A549 (cell line): ENCODE measurements at regions of chr15 and their contacts with region 1.

Region 1: GRCh38 chr15:71800835-71801745 is 9.3 kb upstream of the NR2E3 start:
- DNase-seq: peak; percentile 91 to 96
- ATAC-seq: peak; percentile 91 to 97
- H3K4me3 ChIP-seq: no peak overlapping the region
- H3K27ac ChIP-seq: peak overlapping the region; percentile 84
- H3K4me1 ChIP-seq: peaks cover 45% of the 10 kb centered on the region
- CTCF ChIP-seq: peak; percentile 98
- EP300 ChIP-seq: peak; percentile 95 to 97
- POLR2A ChIP-seq: no peak
- RAD21 ChIP-seq: peak; percentile 99

Region 2: GRCh38 chr15:70679919-70680231 is 1121.2 kb before region 1 on chr15:
- CTCF ChIA-PET with region 1: interaction called, 13 read pairs
- POLR2A ChIA-PET with region 1: no interaction called
- DNase-seq: no peak
- ATAC-seq: no peak
- H3K4me3 ChIP-seq: no peak overlapping the region
- H3K27ac ChIP-seq: no peak overlapping the region
- H3K4me1 ChIP-seq: no peaks in the 10 kb centered on the region
- CTCF ChIP-seq: no peak
- EP300 ChIP-seq: no peak
- POLR2A ChIP-seq: no peak
- RAD21 ChIP-seq: no peak

Region 3: GRCh38 chr15:71262599-71262998 is 538.5 kb before region 1 on chr15:
- CTCF ChIA-PET with region 1: no interaction called
- POLR2A ChIA-PET with region 1: no interaction called
- DNase-seq: no peak
- ATAC-seq: no peak
- H3K4me3 ChIP-seq: no peak overlapping the region
- H3K27ac ChIP-seq: no peak overlapping the region
- H3K4me1 ChIP-seq: no peaks in the 10 kb centered on the region
- CTCF ChIP-seq: no peak
- EP300 ChIP-seq: no peak
- POLR2A ChIP-seq: no peak
- RAD21 ChIP-seq: no peak

Region 4: DNA sequence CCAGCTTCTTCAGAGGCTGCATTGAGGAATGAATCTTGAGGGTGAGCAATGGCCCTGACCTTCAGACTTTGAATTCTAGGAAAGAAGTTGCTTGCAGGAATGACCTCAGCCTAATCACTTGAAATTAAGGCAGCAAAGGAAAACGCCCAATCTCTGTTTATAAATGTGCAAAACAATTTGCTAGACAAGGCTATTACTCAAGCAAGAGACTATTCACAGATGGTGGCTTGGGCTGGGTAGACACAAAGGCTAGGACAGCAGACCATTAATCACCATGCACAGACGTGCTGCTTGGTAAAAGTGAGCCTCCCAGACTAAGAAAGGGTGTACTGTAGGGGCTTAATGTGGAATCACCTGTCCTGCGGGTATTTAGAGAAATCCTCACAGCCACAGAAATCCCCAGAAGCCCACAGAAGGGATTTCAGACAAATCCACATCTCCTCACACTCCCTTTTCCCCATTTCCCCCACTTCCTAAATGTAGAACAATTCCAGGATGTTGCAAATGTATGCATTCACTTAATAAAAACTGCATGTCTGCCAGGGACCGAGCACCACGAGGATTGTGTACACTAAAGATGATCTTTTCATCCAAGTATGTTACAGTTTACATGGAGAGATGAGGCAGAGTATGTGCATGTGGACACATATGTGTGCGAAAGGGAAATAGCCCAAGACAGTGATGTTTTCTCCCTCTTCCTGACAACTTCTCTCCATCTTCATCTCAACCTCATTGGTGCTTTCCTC is 426.3 kb before region 1 on chr15:
- CTCF ChIA-PET with region 1: no interaction called
- POLR2A ChIA-PET with region 1: no interaction called
- DNase-seq: no peak
- ATAC-seq: no peak
- H3K4me3 ChIP-seq: no peak overlapping the region
- H3K27ac ChIP-seq: no peak overlapping the region
- H3K4me1 ChIP-seq: no peaks in the 10 kb centered on the region; the same call in 2 of the 3 replicates
- CTCF ChIP-seq: no peak
- EP300 ChIP-seq: no peak
- POLR2A ChIP-seq: no peak
- RAD21 ChIP-seq: no peak

Region 5: GRCh38 chr15:71443538-71443937 is 357.6 kb before region 1 on chr15:
- CTCF ChIA-PET with region 1: interaction called, 27 read pairs
- POLR2A ChIA-PET with region 1: interaction called, 3 read pairs
- DNase-seq: peak; percentile 47 to 77
- ATAC-seq: peak; percentile 15 to 25; a peak in 1 of 6 replicates
- H3K4me3 ChIP-seq: no peak overlapping the region
- H3K27ac ChIP-seq: peak overlapping the region; percentile 85
- H3K4me1 ChIP-seq: peaks cover 75% of the 10 kb centered on the region
- CTCF ChIP-seq: peak; percentile 81
- EP300 ChIP-seq: no peak
- POLR2A ChIP-seq: no peak
- RAD21 ChIP-seq: peak; percentile 53 to 59

Region 6: DNA sequence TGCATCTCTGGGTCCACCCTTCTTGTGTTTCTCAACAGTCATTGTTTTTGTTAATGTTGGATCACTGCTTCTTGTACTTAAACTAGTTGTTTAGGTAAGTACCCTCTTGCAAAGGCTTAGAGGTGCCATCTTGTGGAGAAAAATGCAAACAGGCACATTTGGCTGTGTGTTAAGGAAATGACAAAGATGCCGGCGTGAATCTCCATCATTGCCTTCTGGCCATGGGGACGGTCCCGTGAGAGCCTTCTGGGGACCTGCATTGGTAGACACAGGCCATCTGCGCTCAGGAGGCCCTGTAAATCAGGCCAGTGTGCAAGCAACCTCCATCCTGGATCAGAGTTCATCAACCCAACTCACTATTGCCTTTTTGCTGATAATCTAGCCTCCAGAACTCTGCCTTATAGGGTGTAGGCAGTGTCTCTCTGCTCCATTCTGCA is 149.3 kb before region 1 on chr15:
- CTCF ChIA-PET with region 1: interaction called, 15 read pairs
- POLR2A ChIA-PET with region 1: no interaction called
- DNase-seq: peak; percentile 51 to 86
- ATAC-seq: peak; percentile 72 to 94
- H3K4me3 ChIP-seq: no peak overlapping the region
- H3K27ac ChIP-seq: peak overlapping the region; percentile 22 to 69
- H3K4me1 ChIP-seq: peaks cover 8% of the 10 kb centered on the region; the same call in 2 of the 3 replicates
- CTCF ChIP-seq: peak; percentile 87
- EP300 ChIP-seq: no peak
- POLR2A ChIP-seq: no peak
- RAD21 ChIP-seq: peak; percentile 89 to 91

Region 7: GRCh38 chr15:71752604-71753289 is 48.3 kb before region 1 on chr15:
- CTCF ChIA-PET with region 1: interaction called, 522 read pairs
- POLR2A ChIA-PET with region 1: interaction called, 17 read pairs
- DNase-seq: peak; percentile 93 to 97
- ATAC-seq: peak; percentile 82 to 84
- H3K4me3 ChIP-seq: no peak overlapping the region
- H3K27ac ChIP-seq: peak overlapping the region; percentile 84 to 99
- H3K4me1 ChIP-seq: peaks cover 55% of the 10 kb centered on the region
- CTCF ChIP-seq: peak; percentile 91
- EP300 ChIP-seq: peak; percentile 70 to 73; a peak in 2 of 5 replicates
- POLR2A ChIP-seq: no peak
- RAD21 ChIP-seq: peak; percentile 94

Region 8: DNA sequence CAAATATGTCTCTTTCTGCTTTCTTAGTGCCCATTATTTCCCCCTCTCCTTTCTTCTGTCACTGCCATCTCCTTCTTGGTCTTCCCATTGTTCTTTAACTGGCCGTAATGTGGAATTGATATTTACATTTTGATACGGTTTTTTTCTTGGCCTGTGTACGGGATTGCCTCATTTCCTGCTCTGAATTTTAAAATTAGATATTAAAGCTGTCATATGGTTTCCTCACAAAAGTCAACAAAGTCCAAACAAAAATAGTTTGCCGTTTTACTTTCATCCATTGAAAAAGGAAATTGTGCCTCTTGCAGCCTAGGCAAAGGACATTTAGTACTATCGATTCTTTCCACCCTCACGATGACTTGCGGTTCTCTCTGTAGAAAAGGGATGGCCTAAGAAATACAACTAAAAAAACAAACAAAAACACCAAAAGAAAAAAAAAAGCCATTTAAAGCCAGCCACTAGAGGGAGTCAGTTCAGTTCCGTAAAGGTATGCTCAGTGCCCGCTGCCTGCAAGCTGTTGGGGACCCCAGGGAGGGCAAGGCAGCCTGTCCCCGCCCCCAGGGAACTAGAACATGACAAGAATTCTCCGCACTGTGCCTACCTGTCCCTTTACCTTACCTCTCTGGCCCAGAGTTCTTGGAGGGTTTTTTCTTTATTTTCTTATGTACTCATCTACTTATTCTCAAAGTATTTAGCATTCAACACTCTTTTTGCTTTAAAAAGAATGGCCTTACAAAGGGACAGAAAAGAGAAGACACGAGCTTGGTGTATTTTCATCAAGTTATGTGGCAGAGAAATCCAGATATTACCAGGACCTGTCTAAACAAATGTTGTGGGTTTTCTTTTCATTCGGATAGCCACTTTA is 20.7 kb before region 1 on chr15:
- CTCF ChIA-PET with region 1: interaction called, 119 read pairs
- POLR2A ChIA-PET with region 1: no interaction called
- DNase-seq: peak; percentile 84 to 90
- ATAC-seq: peak; percentile 59 to 80
- H3K4me3 ChIP-seq: no peak overlapping the region
- H3K27ac ChIP-seq: peak overlapping the region; percentile 72 to 75
- H3K4me1 ChIP-seq: peaks cover 26% of the 10 kb centered on the region
- CTCF ChIP-seq: peak; percentile 93
- EP300 ChIP-seq: no peak
- POLR2A ChIP-seq: no peak
- RAD21 ChIP-seq: peak; percentile 67 to 77

Region 9: DNA sequence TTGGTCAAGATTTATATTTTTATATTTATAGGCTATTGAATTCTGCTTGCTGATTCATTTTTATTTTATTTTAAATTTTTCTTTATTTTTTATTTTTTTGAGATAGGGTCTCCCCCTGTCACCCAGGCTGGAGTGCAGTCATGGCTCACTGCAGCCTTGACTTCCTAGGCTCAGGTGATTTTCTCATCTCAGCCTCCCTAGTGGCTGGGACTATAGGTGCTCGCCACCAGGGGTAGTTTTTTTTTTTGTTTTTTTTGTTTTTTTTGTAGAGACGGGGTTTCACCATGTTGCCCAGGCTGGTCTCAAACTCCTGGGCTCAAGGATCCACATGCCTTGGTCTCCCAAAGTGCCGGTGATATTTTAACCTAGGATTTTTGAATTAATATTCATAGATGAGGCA is 40.5 kb after region 1 on chr15:
- CTCF ChIA-PET with region 1: interaction called, 10 read pairs
- POLR2A ChIA-PET with region 1: no interaction called
- DNase-seq: no peak
- ATAC-seq: no peak
- H3K4me3 ChIP-seq: no peak overlapping the region
- H3K27ac ChIP-seq: no peak overlapping the region
- H3K4me1 ChIP-seq: no peaks in the 10 kb centered on the region
- CTCF ChIP-seq: no peak
- EP300 ChIP-seq: no peak
- POLR2A ChIP-seq: no peak
- RAD21 ChIP-seq: no peak